Activated CD8-positive, alpha-beta T cell treated with anti-CD3 and anti-CD28 coated beads for 36 hours (primary cell): ENCODE measurements at regions of chr15 and their contacts with region 1.

Region 1: DNA sequence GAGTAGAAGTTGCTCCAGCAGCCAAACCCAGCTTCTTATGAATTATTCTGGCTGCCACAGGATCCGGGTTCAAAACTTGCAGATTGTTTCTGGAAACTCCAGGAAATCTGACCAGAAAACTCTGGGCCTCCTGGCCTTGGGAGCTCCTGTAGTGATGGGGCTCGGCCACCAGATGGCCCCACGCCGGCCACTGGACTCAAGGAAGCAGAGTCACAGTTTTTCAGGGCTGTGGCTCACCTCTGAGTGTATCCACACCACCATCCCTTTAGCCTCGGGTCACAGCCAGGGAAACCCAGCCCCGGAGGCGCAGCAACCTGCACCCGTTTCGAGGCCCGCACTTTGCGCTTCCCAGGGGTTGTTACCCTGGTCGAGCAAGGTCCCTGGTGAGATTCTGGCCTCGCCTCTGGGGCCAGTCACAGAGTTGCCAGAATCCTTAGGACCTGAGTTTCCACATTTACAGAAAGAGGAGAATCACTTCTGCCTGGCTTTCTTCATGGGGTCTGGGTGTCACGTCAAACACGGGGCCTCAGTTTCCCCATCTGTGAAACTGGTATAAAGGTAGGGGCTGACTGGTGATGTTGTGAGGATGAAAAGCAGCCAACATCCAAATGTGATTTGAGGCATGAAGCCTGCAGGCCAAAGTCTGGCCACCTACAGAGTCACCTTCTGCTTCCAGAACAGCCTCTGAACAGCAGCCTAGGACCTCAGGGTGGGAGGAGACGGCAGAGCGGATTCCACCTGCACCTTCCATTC is 53.5 kb upstream of the LCTL start:
- DNase-seq: peak; percentile 68
- ATAC-seq: peak; percentile 87
- H3K4me3 Mint-ChIP-seq: no peak overlapping the region
- H3K27ac Mint-ChIP-seq: no peak overlapping the region
- H3K4me1 Mint-ChIP-seq: no peaks in the 10 kb centered on the region
- H3K27me3 Mint-ChIP-seq: peaks cover 17% of the 10 kb centered on the region
- CTCF ChIP-seq: peak; percentile 91

Region 2: GRCh38 chr15:66497502-66498455 is 121.5 kb before region 1 on chr15 and contains the start of gene SNAPC5:
- CTCF ChIA-PET with region 1: no interaction called
- POLR2A ChIA-PET with region 1: no interaction called
- intact Hi-C with region 1: no loop called
- DNase-seq: peak; percentile 99
- ATAC-seq: peak; percentile 85
- H3K4me3 Mint-ChIP-seq: peak within 1 kb of the TSS; percentile 92
- H3K27ac Mint-ChIP-seq: peak within 1 kb of the TSS; percentile 92
- H3K4me1 Mint-ChIP-seq: peaks cover 58% of the 10 kb centered on the region
- H3K27me3 Mint-ChIP-seq: no peaks in the 10 kb centered on the region
- CTCF ChIP-seq: peak; percentile 98
- total RNA-seq, gene SNAPC5: 27.7 to 31.4 TPM

Region 3: DNA sequence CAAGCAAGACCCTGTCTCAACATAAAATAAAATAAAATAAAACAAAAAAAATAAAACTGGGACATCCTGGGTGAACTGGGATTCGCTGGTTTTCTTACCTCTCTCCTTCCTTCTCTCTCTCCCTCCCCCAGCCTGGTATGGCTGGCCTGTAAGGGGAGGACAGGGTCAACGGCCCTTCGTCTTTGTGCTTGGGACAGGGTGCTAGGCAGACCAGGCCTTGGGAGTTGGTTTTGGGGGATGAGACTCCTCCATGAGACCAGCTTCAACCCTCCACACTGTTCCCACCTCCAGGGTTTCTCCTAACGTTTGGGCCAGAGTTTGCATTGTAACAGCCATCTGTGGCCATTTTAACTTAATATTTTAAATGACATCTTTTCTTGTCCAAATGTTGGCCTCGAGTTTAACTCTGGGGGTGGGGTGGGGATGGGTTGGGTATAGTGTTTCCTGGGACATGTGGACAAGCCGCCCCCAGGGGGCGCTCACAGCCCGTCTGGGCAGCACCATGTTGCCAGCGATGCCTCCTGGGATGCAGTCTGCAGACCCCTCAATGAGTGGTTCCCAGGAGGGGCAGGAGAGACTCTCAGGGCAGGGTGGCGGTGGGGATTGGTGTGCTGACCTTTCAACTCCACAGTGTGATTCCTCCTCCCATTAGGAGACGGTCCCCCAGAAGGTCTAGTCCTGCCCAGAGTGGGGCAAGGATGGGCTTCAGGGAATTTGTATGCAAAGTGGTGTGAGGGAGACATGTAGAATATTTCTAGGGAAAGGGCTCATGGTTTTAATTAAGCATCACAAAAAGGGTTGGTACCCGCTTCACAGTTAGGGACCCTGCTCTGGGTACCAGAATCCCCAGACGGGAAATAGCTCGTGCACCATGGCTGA is 15.8 kb before region 1 on chr15:
- CTCF ChIA-PET with region 1: interaction called, 13 read pairs
- POLR2A ChIA-PET with region 1: no interaction called
- intact Hi-C with region 1: no loop called
- DNase-seq: peak; percentile 72
- ATAC-seq: peak; percentile 80
- H3K4me3 Mint-ChIP-seq: no peak overlapping the region
- H3K27ac Mint-ChIP-seq: no peak overlapping the region
- H3K4me1 Mint-ChIP-seq: peaks cover 1% of the 10 kb centered on the region
- H3K27me3 Mint-ChIP-seq: no peaks in the 10 kb centered on the region
- CTCF ChIP-seq: peak; percentile 89

Region 4: GRCh38 chr15:66608881-66609280 is 10.4 kb before region 1 on chr15:
- CTCF ChIA-PET with region 1: interaction called, 13 read pairs
- POLR2A ChIA-PET with region 1: no interaction called
- intact Hi-C with region 1: no loop called
- DNase-seq: no peak
- ATAC-seq: no peak
- H3K4me3 Mint-ChIP-seq: no peak overlapping the region
- H3K27ac Mint-ChIP-seq: no peak overlapping the region
- H3K4me1 Mint-ChIP-seq: no peaks in the 10 kb centered on the region
- H3K27me3 Mint-ChIP-seq: no peaks in the 10 kb centered on the region
- CTCF ChIP-seq: no peak

Region 5: DNA sequence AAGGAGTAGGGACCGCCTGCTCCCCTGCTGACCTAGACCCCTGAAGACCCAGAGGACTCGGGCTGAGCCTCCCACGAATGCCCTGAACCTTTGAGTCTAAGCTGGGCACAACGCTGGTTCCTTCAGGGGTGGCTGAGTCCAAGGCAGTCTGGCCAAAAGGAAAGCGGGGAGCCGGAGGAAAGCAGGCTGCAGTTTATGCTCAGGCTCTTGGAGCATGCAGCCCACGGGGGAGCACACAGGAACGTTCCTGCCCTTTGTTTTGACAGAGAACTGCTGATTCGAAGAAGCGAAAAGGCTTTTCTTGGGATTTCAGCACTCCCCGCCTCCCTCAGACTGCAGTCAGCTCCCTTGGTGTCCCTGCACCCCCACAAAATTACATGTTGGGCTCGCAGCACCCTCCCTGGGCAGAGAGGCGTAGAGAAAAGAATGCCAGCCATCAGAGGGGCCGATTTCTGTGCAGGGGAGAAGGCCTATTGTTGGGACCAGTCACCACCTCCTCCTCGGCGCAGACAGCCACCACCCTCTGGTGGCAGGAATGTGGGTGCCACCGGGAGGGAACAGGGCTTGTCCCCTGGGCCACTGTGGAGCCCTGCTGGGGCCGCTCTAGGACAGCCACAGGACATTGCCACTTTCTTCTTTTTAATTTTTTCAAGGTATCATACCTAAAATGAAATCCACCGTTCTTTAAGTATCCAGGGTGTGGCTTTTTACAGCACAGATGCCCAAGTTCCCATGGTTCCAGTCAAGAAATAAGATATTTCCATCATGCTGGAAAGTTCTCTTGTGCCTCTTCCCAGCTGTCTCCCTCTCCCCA is 154.9 kb after region 1 on chr15:
- CTCF ChIA-PET with region 1: interaction called, 15 read pairs
- POLR2A ChIA-PET with region 1: no interaction called
- intact Hi-C with region 1: no loop called
- DNase-seq: peak; percentile 63
- ATAC-seq: peak; percentile 74
- H3K4me3 Mint-ChIP-seq: no peak overlapping the region
- H3K27ac Mint-ChIP-seq: no peak overlapping the region
- H3K4me1 Mint-ChIP-seq: no peaks in the 10 kb centered on the region
- H3K27me3 Mint-ChIP-seq: no peaks in the 10 kb centered on the region
- CTCF ChIP-seq: peak; percentile 62